ENCODE measurements at regions of chr5 and their contacts with region 1.

Region 1: DNA sequence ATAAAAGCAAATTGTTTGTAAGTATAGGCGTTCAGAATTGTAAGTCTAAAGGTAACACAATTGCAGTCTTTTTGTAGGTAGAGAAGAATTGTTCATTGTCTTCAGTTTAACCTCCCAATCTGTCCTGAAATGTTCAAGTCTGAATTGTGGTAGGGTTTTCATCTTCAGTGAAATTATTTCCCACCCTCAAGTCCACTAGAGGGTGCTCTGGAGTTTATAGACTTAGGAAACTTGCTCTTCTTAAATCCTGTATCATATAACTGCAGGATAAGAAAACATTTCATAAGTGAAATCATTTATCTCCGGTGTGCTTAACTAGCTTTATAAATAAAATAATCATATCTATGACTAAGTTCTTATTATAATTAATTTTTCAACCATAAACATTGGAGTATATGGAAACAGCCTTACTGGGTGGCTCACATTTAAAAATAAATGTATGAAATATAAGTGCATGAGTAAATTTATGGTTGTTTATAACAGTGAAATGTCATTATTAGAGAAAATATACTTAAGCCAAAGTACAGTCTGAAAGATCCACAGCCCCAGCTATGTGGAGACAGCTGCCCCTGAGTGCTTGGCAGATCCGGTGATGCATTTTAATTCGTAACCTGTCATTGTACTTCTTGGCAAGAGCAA is 182.4 kb upstream of the OTULINL start:
- DNase-seq: peak; percentile 36
- CTCF ChIP-seq: peak; percentile 56

Region 2: DNA sequence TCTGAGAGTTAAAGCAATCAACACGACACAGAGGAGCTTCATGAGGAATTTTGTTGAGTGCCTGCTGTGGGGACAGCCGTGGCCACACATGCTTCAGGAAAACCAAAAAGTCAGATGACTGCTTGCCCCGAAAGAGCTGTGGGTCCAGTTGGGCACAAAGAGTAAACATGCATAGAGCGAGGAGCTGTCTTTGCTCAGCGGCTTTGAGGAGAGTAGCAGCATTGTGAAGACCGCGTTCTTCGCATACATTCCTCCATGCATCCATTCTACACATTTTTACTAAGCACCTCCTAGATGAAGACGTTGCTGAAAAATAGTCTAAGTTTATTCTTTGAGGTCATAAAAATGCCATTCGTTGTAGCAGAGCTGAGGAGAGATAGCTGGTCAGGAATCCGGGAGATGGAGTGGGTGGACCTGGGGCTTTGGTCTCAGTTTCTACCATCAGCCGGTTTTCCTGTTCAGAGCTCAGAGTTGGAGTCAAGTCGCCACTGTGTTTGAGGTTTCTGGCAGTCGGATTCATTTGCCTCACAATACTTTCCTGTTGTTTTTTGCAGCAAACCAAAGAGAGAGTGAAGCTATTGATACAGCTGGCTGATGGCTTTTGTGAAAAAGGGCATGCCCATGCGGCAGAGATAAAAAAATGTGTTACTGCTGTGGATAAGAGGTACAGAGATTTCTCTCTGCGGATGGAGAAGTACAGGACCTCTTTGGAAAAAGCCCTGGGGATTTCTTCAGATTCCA is 12.1 kb before region 1 on chr5:
- CTCF ChIA-PET with region 1: interaction called, 15 read pairs
- POLR2A ChIA-PET with region 1: no interaction called
- DNase-seq: no peak
- CTCF ChIP-seq: no peak

Region 3: GRCh38 chr5:14415024-14415697 is 16.0 kb after region 1 on chr5:
- CTCF ChIA-PET with region 1: interaction called, 10 read pairs
- POLR2A ChIA-PET with region 1: interaction called, 3 read pairs
- DNase-seq: peak; percentile 61
- CTCF ChIP-seq: no peak